ENCODE measurements at regions of chr3 and their contacts with region 1.

Region 1: DNA sequence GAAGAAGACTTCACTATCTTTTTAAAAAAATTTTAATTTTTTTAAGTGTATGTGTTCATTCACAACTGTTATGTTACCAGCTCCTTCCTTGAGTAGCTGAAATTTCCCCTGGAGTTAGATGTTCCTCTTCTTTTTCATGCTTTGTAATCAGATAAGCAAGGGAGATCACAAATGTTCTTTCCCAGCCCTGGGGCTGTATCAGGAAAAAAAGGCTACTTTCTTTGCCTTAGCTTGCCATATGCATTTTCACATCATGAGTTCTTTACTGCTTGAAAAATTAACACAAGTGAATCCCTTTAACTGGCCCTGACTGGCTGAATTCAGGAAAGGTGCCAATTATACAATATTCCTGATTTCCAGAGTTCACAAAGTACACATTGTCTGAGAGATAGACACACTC is 353.2 kb upstream of the ATP11B start:
- DNase-seq: no peak

Region 2: GRCh38 chr3:182182531-182182968 is 257.6 kb before region 1 on chr3:
- intact Hi-C with region 1: loop called in 1 of 2 experiments (anchors 5 kb)
- DNase-seq: no peak

Measured in posterior vena cava (tissue), 2 donors.